ENCODE measurements at regions of chr16 and their contacts with region 1.

Region 1: GRCh38 chr16:79601931-79602627 is 1.5 kb upstream of the MAF start:
- DNase-seq: peak; percentile 92
- ATAC-seq: peak; percentile 11
- H3K4me3 Mint-ChIP-seq: peak overlapping the region; percentile 88
- H3K27ac Mint-ChIP-seq: peak overlapping the region; percentile 97
- H3K4me1 Mint-ChIP-seq: peaks cover 33% of the 10 kb centered on the region
- H3K27me3 Mint-ChIP-seq: peaks cover 8% of the 10 kb centered on the region

Region 2: GRCh38 chr16:79554912-79555311 is 47.2 kb before region 1 on chr16:
- CTCF ChIA-PET with region 1: no interaction called
- DNase-seq: no peak
- ATAC-seq: no peak
- H3K4me3 Mint-ChIP-seq: no peak overlapping the region
- H3K27ac Mint-ChIP-seq: no peak overlapping the region
- H3K4me1 Mint-ChIP-seq: no peaks in the 10 kb centered on the region
- H3K27me3 Mint-ChIP-seq: peaks cover 36% of the 10 kb centered on the region

Region 3: GRCh38 chr16:79618692-79619050 is 16.6 kb after region 1 on chr16:
- CTCF ChIA-PET with region 1: interaction called, 27 read pairs
- DNase-seq: peak; percentile 81
- ATAC-seq: peak; percentile 70
- H3K4me3 Mint-ChIP-seq: peak overlapping the region; percentile 41
- H3K27ac Mint-ChIP-seq: peak overlapping the region; percentile 93
- H3K4me1 Mint-ChIP-seq: peaks cover 66% of the 10 kb centered on the region
- H3K27me3 Mint-ChIP-seq: peaks cover 21% of the 10 kb centered on the region

Region 4: DNA sequence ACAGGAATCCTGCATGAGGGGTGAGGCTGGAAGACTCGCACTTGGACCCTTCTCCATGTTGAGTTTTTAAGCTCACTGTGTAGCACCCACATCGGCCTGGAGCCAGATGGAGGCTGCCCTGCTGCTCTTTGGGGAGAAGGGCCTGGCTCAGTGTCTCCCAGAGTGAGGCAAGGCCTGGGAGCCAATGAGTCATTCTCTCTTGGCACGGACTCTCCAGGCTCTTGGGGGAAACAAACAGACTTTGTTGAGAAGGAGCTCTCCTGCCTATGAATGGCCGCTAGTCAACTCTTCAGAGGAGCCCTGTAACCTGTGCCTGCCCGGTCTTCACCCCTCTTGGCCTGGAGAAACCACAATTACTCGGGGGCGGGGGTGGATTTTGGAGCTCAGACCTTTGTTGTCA is 49.3 kb after region 1 on chr16:
- CTCF ChIA-PET with region 1: no interaction called
- DNase-seq: no peak
- ATAC-seq: no peak
- H3K4me3 Mint-ChIP-seq: no peak overlapping the region
- H3K27ac Mint-ChIP-seq: no peak overlapping the region
- H3K4me1 Mint-ChIP-seq: no peaks in the 10 kb centered on the region
- H3K27me3 Mint-ChIP-seq: peaks cover 48% of the 10 kb centered on the region

Measured in activated CD8-positive, alpha-beta memory T cell treated with anti-CD3 and anti-CD28 coated beads, Interleukin-2, amount 10 ng/mL, durations not matched to agents 7 days and 5 days (primary cell).